ENCODE measurements at regions of chr2 and their contacts with region 1.

Region 1: DNA sequence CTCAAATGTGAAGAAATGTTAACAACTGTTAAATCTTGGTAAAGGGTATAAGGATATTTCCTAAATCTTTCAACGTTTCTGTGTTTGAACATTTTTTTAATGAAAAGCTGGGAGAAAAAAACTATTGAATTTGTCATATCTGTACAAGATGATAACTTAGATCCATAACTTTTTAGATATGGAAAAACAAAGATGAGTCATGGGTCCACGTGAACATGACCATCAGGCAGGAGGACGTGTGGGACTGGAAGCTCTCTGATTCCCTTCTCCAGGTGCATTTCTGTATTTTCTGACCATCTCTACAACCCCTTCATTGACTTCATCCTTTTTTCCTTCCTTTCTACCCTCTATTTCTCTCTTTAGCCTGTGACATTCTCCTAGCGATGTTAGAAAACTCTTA is 141.6 kb downstream of the DHRS9 start:
- DNase-seq: no peak
- H3K4me3 ChIP-seq: no peak overlapping the region
- CTCF ChIP-seq: no peak

Region 2: GRCh38 chr2:169159686-169160085 is 51.2 kb before region 1 on chr2:
- in situ Hi-C with region 1: loop called (anchors 5 kb)
- DNase-seq: no peak
- H3K4me3 ChIP-seq: no peak overlapping the region
- CTCF ChIP-seq: no peak

Region 3: GRCh38 chr2:169275696-169276444 is 65.0 kb after region 1 on chr2:
- in situ Hi-C with region 1: no loop called
- DNase-seq: no peak
- H3K4me3 ChIP-seq: no peak overlapping the region
- CTCF ChIP-seq: peak; percentile 38